ENCODE measurements at regions of chr12 and their contacts with region 1.

Region 1: GRCh38 chr12:133130038-133130807 is at the starts of genes ZNF10 and ZNF891:
- DNase-seq: peak; percentile 97 to 98 (median 97)
- ATAC-seq: peak; percentile 97 to 99 (median 98)
- H3K4me3 ChIP-seq: peak within 1 kb of the TSS; percentile 50 to 92 (median 84)
- H3K27ac ChIP-seq: peak within 1 kb of the TSS; percentile 86 to 99 (median 94)
- H3K4me1 ChIP-seq: peaks cover 0 to 16% (median 2%) of the 10 kb centered on the region in 12 donors
- H3K27me3 ChIP-seq: no peaks in the 10 kb centered on the region
- CTCF ChIP-seq: no peak
- POLR2A ChIP-seq: peak; percentile 54 to 87
- total RNA-seq, gene ZNF10: 4.8 to 9.9 (median 8.1) TPM
- total RNA-seq, gene ZNF891: 0.60 to 1.3 (median 1.0) TPM

Region 2: DNA sequence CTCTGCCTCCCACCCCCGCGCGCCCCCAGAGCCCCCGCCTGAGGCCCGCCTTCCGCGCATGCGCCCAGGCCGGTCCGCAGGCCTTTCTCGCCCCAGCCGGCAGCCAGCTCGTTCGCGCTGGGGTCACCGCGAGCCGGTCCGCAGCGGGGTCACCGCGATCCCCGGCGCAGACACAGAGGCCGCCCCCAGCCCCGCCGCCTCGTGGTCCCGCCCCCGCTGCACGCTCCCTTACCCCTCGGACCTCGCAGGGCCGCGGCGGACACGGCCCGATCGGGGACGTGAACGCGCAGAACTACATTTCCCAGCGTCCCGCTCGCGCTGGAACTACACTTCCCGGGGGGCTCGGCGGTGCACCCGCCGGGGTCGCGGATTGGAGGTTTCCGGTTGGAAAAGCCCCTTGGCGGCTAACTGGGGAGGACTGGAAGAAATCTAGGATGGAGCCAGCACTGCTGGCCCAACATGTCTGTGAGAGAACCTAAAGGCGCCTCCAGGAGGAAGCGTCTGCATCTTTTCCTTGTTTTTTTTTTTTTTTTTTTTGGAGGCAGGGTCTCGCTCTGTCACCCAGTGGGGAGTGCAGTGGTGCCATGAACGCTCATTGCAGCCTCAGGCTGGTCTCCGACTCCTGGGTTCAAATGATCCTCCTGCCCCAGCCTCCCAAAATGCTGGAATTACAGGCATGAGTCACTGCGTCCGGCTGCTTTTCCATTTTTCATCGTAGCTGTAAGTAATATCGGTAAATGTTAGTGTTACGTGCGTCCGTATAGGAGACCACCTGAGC is 174.0 kb before region 1 on chr12 and contains the start of gene ZNF605:
- intact Hi-C with region 1: loop called in 1 of 10 experiments (anchors 2 kb)
- DNase-seq: peak; percentile 92 to 96 (median 94)
- ATAC-seq: peak; percentile 83 to 96 (median 94)
- H3K4me3 ChIP-seq: peak within 1 kb of the TSS; percentile 71 to 98 (median 91)
- H3K27ac ChIP-seq: peak within 1 kb of the TSS; percentile 60 to 99 (median 96)
- H3K4me1 ChIP-seq: peaks cover 0 to 23% (median 11%) of the 10 kb centered on the region in 12 donors
- H3K27me3 ChIP-seq: no peaks in the 10 kb centered on the region
- CTCF ChIP-seq: no peak
- POLR2A ChIP-seq: peak in 1 of 2 donors; percentile 26
- total RNA-seq, gene ZNF605: 3.4 to 14.2 (median 10.3) TPM

Region 3: GRCh38 chr12:132986001-132986912 is 144.0 kb before region 1 on chr12 and contains the start of gene ZNF26:
- intact Hi-C with region 1: loop called in 1 of 10 experiments (anchors 2 kb)
- DNase-seq: peak; percentile 92 to 95 (median 93)
- ATAC-seq: peak; percentile 99 to 100 (median 100)
- H3K4me3 ChIP-seq: peak within 1 kb of the TSS; percentile 62 to 97 (median 82)
- H3K27ac ChIP-seq: peak within 1 kb of the TSS; percentile 53 to 91 (median 84)
- H3K4me1 ChIP-seq: peaks cover 6 to 18% (median 12%) of the 10 kb centered on the region in 12 donors
- H3K27me3 ChIP-seq: no peaks in the 10 kb centered on the region
- CTCF ChIP-seq: no peak
- POLR2A ChIP-seq: peak in 1 of 2 donors; percentile 71
- total RNA-seq, gene ZNF26: 0.60 to 6.7 (median 3.7) TPM

Region 4: GRCh38 chr12:133037207-133038005 is 92.8 kb before region 1 on chr12 and contains the start of gene ZNF84:
- intact Hi-C with region 1: loop called in 4 of 10 experiments (anchors 2 to 5 kb)
- DNase-seq: peak; percentile 96 to 98 (median 98)
- ATAC-seq: peak; percentile 99 to 100 (median 99)
- H3K4me3 ChIP-seq: peak within 1 kb of the TSS; percentile 60 to 86 (median 78)
- H3K27ac ChIP-seq: peak within 1 kb of the TSS; percentile 79 to 97 (median 92)
- H3K4me1 ChIP-seq: peaks cover 0 to 21% (median 7%) of the 10 kb centered on the region in 12 donors
- H3K27me3 ChIP-seq: no peaks in the 10 kb centered on the region
- CTCF ChIP-seq: no peak
- POLR2A ChIP-seq: peak in 1 of 2 donors; percentile 57
- total RNA-seq, gene ZNF84: 11.0 to 24.0 (median 15.9) TPM

Region 5: DNA sequence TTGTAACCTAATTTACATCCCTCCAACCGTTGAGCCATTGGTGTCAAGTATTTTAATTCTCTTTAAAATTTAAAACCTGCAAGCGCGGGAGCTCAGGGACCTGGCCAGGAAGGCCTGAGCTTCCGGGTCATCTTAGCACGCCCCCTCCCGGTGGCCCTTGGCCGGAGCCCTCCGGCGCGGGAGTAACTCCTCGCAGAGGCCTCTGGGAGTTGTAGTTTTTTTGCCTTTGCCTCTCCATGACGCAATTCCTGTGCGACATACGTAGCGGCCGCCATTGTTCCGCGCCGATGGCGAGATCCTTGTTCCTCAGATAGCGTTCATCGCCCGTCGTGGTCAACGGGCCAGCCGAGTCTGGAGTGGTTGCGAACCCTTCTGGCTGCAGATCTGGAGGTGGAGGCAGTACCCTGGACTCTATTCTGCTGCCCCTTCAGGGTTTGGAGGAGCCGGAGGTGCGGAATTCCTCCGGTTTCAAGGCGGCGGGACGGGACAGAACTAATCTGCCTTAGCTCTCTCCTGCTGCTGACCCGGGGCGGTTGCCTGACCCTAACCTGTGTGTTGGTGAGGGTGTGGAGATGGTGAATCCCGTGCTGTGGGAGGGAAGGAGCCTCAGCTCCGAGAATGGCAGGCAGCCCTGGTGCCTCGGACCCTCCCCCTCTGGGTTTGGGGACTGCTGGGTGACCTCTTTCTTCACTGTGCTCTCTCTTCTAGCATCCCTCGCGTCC is 51.2 kb after region 1 on chr12 and contains the start of gene ZNF268:
- intact Hi-C with region 1: loop called in 3 of 10 experiments (anchors 2 kb)
- DNase-seq: peak; percentile 92 to 95 (median 94)
- ATAC-seq: peak; percentile 94 to 99 (median 98)
- H3K4me3 ChIP-seq: peak within 1 kb of the TSS; percentile 63 to 97 (median 87)
- H3K27ac ChIP-seq: peak within 1 kb of the TSS in 11 of 12 donors; percentile 45 to 83 (median 70)
- H3K4me1 ChIP-seq: peaks cover 0 to 12% (median 7%) of the 10 kb centered on the region in 12 donors
- H3K27me3 ChIP-seq: no peaks in the 10 kb centered on the region
- CTCF ChIP-seq: peak; percentile 69 to 96 (median 88)
- POLR2A ChIP-seq: peak in 1 of 2 donors; percentile 49
- total RNA-seq, gene ZNF268: 8.1 to 15.5 (median 10.0) TPM

Region 6: DNA sequence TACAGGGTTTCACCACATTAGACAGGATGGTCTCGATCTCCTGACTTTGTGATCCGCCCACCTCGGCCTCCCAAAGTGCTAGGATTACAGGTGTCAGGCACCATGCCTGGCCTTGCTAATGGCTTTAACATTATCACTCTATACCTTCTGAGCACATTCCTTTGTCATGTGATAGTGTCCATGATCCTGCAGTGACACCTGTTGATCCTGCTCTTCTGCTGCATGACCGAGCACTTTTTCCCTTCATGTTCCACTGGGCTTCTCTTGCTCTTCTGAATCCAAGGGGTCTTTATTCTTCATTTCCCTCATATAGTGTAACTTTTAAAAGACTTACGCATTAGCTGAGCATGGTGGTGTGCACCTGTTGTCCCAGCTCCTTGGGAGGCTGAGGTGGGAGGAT is 62.6 kb after region 1 on chr12:
- intact Hi-C with region 1: no loop called
- DNase-seq: no peak
- ATAC-seq: no peak
- H3K4me3 ChIP-seq: no peak overlapping the region
- H3K27ac ChIP-seq: no peak overlapping the region
- H3K4me1 ChIP-seq: no peaks in the 10 kb centered on the region
- H3K27me3 ChIP-seq: no peaks in the 10 kb centered on the region
- CTCF ChIP-seq: no peak
- POLR2A ChIP-seq: no peak